Activated CD8-positive, alpha-beta T cell treated with anti-CD3 and anti-CD28 coated beads for 36 hours (primary cell): ENCODE measurements at regions of chr1 and their contacts with region 1.

Region 1: DNA sequence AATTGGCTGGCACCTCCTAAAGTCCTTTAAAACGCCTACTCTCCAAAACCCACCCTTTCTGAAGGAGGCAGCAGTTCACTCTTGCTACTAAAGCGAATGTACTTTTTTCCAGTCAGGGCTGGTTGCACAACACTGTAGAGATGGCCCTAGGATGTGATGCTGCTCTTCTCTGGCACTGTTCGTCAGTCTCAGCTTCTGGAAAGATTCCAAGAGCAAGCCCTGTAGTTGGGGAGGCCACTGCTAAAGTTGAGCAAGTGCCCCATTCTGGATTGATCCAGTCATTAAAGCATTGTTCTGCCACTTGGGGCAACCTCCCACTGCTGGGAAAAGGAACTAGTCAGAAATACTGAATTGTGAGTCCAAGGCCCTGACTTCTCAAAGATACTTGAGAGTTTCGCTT is 28.5 kb upstream of the KCNQ4 start:
- DNase-seq: no peak
- ATAC-seq: no peak
- H3K4me3 Mint-ChIP-seq: no peak overlapping the region
- H3K27ac Mint-ChIP-seq: no peak overlapping the region
- H3K4me1 Mint-ChIP-seq: peaks cover 30% of the 10 kb centered on the region
- H3K27me3 Mint-ChIP-seq: no peaks in the 10 kb centered on the region
- CTCF ChIP-seq: no peak

Region 2: DNA sequence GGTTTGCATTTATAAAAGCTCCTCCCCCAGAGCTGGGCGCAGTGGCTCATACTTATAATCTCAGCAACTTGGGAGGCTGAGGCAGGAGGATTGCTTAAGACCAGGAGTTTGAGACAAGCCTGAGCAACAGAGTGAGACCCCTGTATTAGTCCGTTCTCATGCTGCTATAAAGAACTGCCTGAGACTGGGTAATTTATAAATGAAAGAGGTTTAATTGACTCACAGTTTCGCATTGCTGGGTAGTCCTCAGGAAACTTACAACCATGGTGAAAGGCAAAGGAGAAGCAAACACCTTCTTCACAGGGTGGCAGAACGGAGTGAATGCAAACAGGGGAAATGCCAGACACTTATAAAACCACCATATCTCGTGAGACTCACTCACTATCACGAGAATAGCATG is 171.1 kb before region 1 on chr1:
- CTCF ChIA-PET with region 1: no interaction called
- POLR2A ChIA-PET with region 1: no interaction called
- intact Hi-C with region 1: no loop called
- DNase-seq: peak; percentile 40
- ATAC-seq: peak; percentile 71
- H3K4me3 Mint-ChIP-seq: no peak overlapping the region
- H3K27ac Mint-ChIP-seq: peak overlapping the region; percentile 13
- H3K4me1 Mint-ChIP-seq: peaks cover 15% of the 10 kb centered on the region
- H3K27me3 Mint-ChIP-seq: peaks cover 4% of the 10 kb centered on the region
- CTCF ChIP-seq: no peak

Region 3: GRCh38 chr1:40691538-40692428 is 63.3 kb before region 1 on chr1 and contains the start of gene NFYC:
- CTCF ChIA-PET with region 1: interaction called, 4 read pairs
- POLR2A ChIA-PET with region 1: interaction called, 16 read pairs
- intact Hi-C with region 1: no loop called
- DNase-seq: peak; percentile 98
- ATAC-seq: peak; percentile 86
- H3K4me3 Mint-ChIP-seq: peak within 1 kb of the TSS; percentile 87
- H3K27ac Mint-ChIP-seq: peak within 1 kb of the TSS; percentile 93
- H3K4me1 Mint-ChIP-seq: peaks cover 50% of the 10 kb centered on the region
- H3K27me3 Mint-ChIP-seq: no peaks in the 10 kb centered on the region
- CTCF ChIP-seq: no peak
- total RNA-seq, gene NFYC: 45.6 to 53.8 TPM

Region 4: GRCh38 chr1:40783001-40783905 is 28.2 kb after region 1 on chr1 and contains the start of gene KCNQ4:
- CTCF ChIA-PET with region 1: no interaction called
- POLR2A ChIA-PET with region 1: no interaction called
- intact Hi-C with region 1: no loop called
- DNase-seq: peak; percentile 25
- ATAC-seq: peak; percentile 51
- H3K4me3 Mint-ChIP-seq: peak within 1 kb of the TSS; percentile 62
- H3K27ac Mint-ChIP-seq: peak within 1 kb of the TSS; percentile 3
- H3K4me1 Mint-ChIP-seq: peaks cover 7% of the 10 kb centered on the region
- H3K27me3 Mint-ChIP-seq: peaks cover 26% of the 10 kb centered on the region
- CTCF ChIP-seq: no peak
- total RNA-seq, gene KCNQ4: 0.38 to 0.43 TPM

Region 5: DNA sequence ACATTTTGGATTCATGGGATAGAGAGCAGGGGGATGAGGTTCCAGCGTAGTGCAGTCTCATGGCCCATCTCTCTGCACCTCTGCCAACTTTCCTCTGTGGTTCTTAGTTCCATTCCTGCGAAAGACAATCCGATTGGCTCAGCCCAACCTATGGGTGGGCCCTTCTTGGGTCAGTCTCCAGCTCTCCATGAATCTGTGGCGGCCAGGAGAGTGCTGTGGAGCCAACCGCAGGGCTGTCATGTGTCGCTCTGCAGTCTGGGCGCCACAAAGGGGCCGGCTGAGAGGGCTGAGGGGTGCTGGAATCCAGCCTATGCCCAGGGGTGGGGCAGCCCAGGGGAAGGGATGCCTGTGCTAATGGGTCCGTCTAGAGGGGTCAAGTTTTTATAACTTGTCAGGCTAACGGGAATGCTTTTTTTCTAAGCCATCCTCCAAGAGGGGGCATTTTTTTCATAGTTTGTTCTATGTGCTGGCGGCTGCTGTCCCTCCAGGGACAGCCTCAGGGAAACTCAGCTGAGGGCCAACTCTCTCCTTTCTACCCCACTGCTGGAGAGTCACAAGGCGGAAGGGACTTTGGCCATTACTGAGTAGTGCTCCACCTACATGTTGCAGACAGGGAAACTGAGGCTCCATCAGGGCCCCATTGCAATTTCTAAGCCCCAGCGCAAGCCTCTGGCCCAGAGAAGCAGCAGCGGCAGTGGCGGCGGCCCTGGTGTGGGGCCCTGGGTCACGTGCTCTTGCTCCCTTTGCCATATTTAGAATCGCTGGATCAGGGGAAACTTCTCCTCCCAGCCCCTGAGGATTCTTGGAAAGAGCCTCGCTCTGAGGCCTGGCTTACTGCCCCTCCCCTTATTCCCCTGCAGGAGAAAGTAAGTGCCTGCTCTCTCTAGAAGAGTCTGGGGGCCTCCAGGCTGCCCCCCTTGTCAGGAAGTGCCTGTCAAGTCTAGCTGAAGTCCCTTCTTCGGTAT is 51.9 kb after region 1 on chr1:
- CTCF ChIA-PET with region 1: no interaction called
- POLR2A ChIA-PET with region 1: no interaction called
- intact Hi-C with region 1: no loop called
- DNase-seq: no peak
- ATAC-seq: no peak
- H3K4me3 Mint-ChIP-seq: no peak overlapping the region
- H3K27ac Mint-ChIP-seq: no peak overlapping the region
- H3K4me1 Mint-ChIP-seq: peaks cover 24% of the 10 kb centered on the region
- H3K27me3 Mint-ChIP-seq: no peaks in the 10 kb centered on the region
- CTCF ChIP-seq: no peak

Region 6: DNA sequence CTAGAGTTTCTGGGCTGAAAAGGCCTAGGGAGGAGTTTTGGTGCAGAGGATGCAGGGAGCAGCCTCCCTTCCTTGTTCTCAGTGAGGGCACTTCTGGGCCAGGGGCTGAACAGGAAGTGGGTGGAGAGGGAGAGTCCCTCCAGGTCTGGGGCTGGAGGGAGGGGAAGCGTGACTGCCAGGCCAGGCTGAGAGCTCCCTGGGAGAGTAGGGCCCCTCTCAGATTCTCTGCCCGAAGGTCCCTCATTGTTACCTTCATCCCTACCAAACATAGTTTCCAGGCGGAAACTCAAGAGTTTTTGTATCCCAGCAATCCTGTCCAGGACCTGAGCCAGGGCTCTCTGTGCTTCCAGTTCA is 70.3 kb after region 1 on chr1:
- CTCF ChIA-PET with region 1: no interaction called
- POLR2A ChIA-PET with region 1: no interaction called
- intact Hi-C with region 1: no loop called
- DNase-seq: peak; percentile 48
- ATAC-seq: peak; percentile 87
- H3K4me3 Mint-ChIP-seq: no peak overlapping the region
- H3K27ac Mint-ChIP-seq: no peak overlapping the region
- H3K4me1 Mint-ChIP-seq: peaks cover 14% of the 10 kb centered on the region
- H3K27me3 Mint-ChIP-seq: no peaks in the 10 kb centered on the region
- CTCF ChIP-seq: no peak